ENCODE measurements at regions of chr3 and their contacts with region 1.

Region 1: GRCh38 chr3:190224863-190225692 is 97.2 kb downstream of the CLDN1 start:
- DNase-seq: no peak
- ATAC-seq: peak; percentile 60

Region 2: DNA sequence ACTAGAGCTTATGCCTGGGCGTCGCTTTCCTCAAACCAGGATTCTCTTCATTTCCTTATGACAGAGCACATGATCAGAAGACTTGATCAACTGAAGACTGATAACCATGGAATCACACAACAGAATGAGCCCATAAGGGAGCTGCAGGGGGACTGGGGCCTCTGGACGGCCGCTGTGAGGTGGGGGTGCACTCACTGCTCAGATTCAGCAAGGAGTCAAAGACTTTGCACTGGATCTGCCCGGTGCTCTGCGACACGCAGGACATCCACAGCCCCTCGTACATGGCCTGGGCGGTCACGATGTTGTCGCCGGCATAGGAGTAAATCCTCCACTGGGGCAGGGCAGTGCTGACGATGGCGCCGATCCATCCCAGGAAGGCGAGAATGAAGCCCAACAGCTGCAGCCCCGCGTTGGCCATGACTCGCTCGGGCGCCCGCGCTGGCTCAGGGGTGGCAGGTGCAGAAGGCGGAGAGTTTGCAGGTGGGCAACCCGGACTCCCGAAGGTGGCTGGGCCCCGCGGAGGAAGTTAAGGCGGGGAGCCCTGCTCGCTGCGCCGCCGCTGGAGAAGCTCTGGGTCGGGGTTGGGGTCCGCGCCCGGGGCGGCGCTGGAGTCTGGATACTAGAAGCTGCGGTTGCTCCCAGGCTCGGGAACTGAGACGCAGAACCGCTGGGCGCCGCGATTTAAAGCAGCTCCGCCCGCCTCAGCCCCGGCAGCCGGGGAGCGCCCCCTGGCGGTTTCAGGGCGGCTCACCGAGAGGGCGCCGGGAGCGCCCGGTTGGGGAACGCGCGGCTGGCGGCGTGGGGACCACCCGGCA is 96.9 kb after region 1 on chr3 and contains the start of gene CLDN1:
- intact Hi-C with region 1: loop called in 1 of 2 experiments (anchors 5 kb)
- DNase-seq: peak; percentile 73 to 87
- ATAC-seq: peak; percentile 96
- total RNA-seq, gene CLDN1: 0.59 to 2.6 TPM

Region 3: GRCh38 chr3:190333961-190334360 is 108.9 kb after region 1 on chr3:
- intact Hi-C with region 1: no loop called
- DNase-seq: no peak
- ATAC-seq: no peak

Region 4: DNA sequence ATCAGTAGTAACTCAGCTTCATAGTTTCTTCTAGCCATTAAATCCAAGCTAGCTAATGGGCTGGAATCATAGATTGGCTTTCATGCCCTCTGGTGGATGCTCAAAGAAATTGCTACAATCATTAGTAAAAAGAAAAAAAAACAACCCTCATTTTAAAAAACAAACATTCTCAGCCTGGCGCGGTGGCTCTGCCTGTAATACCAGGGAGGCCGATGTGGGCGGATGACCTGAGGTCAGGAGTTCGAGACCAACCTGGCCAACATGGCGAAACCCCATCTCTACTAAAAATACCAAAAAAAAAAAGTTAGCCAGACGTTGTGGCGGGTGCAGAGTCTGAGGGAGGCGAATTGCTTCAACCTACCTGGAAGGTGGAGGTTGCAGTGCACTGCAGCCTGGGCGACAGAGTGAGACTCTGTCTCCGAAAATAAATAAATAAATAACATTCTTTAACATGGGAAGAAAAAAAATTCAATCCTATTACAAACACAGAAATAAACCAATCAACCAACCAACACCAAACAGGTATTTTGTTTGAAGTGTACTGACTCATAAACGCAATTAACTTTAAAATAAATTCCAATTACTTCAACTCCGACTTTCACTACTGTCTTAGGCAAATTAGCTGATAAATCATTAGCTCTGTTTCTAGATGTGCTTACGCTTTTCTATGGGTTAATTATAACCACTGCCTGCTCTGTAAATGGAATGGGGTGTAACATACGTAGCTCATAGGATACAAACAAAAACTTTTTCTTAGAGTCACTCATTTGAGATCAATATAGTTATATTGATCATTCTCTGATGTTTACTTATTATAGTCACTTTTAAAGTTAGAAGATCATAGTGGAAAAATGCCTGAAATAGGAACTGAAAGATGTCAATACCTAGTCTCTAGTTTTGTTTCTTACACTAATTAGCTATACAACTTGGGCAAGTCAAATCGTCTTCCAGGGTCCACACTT is 199.7 kb after region 1 on chr3:
- intact Hi-C with region 1: loop called in 1 of 2 experiments (anchors 10 kb)
- DNase-seq: peak in 1 of 2 donors; percentile 41
- ATAC-seq: peak; percentile 65